A549 (cell line): ENCODE measurements at regions of chr17 and their contacts with region 1.

Region 1: DNA sequence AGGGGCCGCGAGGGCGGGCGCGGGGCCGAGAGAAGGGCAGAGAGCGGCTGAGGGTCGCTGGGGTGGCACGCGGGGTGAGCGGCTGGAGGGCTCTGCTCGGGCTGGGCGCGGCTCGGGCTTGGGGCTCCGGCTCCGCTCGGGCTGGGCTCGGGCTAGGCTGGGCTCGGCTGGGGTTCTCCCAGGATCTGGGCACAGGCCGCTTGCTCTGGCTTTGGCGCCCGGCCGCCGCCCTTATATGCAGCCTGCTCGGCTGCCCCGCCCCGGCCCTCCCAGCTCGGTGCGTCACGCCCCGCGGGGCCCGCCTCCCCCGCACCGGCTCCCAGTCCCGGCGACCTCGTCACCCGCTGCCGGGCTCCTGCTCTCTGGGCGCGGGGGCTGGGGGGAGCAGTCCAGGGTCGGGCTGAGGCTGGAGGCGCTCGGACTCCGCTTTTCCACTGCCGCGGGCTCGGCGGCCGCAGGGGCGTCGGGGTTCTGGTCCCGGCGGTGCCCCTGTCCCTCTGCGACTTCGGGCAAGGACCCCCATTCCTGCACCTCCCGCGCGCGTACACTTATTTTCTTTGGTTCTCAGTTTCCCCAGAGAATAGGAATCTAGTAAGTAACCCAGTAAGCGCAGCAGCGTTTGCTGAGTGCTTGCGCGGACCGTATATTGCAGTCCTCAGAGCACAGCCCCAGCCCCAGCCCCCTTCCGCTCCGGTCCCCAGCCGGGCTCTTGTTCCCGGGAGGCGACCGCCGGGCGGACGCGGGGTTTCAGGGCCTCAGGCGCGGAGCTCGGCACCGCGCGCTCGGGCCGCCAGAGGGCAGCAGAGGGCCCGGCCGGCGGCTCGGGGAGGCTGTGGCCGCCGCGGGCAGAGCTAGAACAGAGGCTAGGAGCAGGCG is at the start of gene RASD1:
- DNase-seq: peak; percentile 85 to 88
- ATAC-seq: peak; percentile 83 to 90
- H3K4me3 ChIP-seq: peak within 1 kb of the TSS; percentile 63
- H3K27ac ChIP-seq: peak within 1 kb of the TSS; percentile 81 to 93
- H3K4me1 ChIP-seq: peaks cover 4% of the 10 kb centered on the region; the same call in 2 of the 3 replicates
- CTCF ChIP-seq: peak; percentile 98
- EP300 ChIP-seq: no peak
- POLR2A ChIP-seq: peak; percentile 76
- RAD21 ChIP-seq: peak; percentile 69 to 94
- polyA plus RNA-seq, gene RASD1: 0.99 and 1.4 TPM in 2 replicates

Region 2: DNA sequence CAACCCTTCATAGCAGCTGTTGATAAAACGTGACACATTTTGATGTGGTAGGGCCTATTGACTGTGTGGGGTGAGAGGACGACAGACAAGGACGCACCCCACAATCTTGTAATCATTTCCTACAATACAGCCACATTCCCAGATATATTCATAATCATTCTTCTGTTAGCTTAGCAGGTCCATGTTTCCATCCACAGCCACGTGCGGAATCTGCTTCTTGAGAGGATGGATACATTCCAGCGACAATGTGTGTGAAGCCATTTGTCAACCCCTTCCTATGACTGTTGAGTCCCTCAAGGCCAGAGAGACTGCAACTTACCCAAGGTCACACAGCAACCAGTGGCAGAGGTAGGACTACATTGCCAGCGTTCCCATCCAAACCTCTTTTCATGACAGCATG is 206.7 kb before region 1 on chr17:
- CTCF ChIA-PET with region 1: no interaction called
- POLR2A ChIA-PET with region 1: no interaction called
- DNase-seq: no peak
- ATAC-seq: peak in 1 of 2 experiments; percentile 38; a peak in 2 of 6 replicates
- H3K4me3 ChIP-seq: no peak overlapping the region
- H3K27ac ChIP-seq: no peak overlapping the region
- H3K4me1 ChIP-seq: no peaks in the 10 kb centered on the region
- CTCF ChIP-seq: no peak
- EP300 ChIP-seq: no peak
- POLR2A ChIP-seq: no peak
- RAD21 ChIP-seq: no peak

Region 3: GRCh38 chr17:17322516-17323510 is 173.6 kb before region 1 on chr17:
- CTCF ChIA-PET with region 1: no interaction called
- POLR2A ChIA-PET with region 1: no interaction called
- DNase-seq: no peak
- ATAC-seq: peak; percentile 37 to 39; a peak in 4 of 6 replicates
- H3K4me3 ChIP-seq: no peak overlapping the region
- H3K27ac ChIP-seq: no peak overlapping the region
- H3K4me1 ChIP-seq: no peaks in the 10 kb centered on the region
- CTCF ChIP-seq: no peak
- EP300 ChIP-seq: no peak
- POLR2A ChIP-seq: no peak
- RAD21 ChIP-seq: no peak

Region 4: DNA sequence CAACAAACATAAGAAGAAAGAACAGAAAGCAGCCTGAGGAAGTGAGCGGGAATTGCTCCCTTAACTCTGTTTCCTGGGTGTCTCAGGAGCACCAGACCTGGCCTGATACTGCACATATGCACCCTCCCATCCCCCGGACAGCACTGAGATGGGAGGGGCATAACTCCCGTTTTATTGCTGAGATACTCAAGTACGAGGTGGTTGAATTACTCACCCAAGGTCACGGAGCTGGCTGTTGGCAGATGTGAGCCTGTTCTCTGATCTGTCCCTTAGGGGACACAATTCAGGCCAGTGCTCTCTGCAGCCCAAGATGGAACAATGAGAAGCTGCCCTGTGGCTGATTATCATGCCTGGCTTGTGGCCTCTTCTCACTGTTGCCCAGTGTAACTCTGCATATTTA is 28.7 kb before region 1 on chr17:
- CTCF ChIA-PET with region 1: interaction called, 22 read pairs
- POLR2A ChIA-PET with region 1: interaction called, 13 read pairs
- DNase-seq: peak in 1 of 2 experiments; percentile 29
- ATAC-seq: peak; percentile 31 to 34; a peak in 3 of 6 replicates
- H3K4me3 ChIP-seq: no peak overlapping the region
- H3K27ac ChIP-seq: no peak overlapping the region
- H3K4me1 ChIP-seq: 0 out of 3 replicates have a peak, but pooled peaks cover 5% of the 10 kb centered on the region
- CTCF ChIP-seq: no peak
- EP300 ChIP-seq: no peak
- POLR2A ChIP-seq: no peak
- RAD21 ChIP-seq: no peak

Region 5: GRCh38 chr17:17511881-17512858 is 15.7 kb after region 1 on chr17:
- CTCF ChIA-PET with region 1: interaction called, 102 read pairs
- POLR2A ChIA-PET with region 1: interaction called, 10 read pairs
- DNase-seq: peak; percentile 39 to 54
- ATAC-seq: peak; percentile 31 to 62; a peak in 3 of 6 replicates
- H3K4me3 ChIP-seq: no peak overlapping the region
- H3K27ac ChIP-seq: peak overlapping the region in 1 of 2 experiments; percentile 45; a peak in 3 of 6 replicates
- H3K4me1 ChIP-seq: peaks cover 15% of the 10 kb centered on the region
- CTCF ChIP-seq: no peak
- EP300 ChIP-seq: no peak
- POLR2A ChIP-seq: no peak
- RAD21 ChIP-seq: no peak

Region 6: DNA sequence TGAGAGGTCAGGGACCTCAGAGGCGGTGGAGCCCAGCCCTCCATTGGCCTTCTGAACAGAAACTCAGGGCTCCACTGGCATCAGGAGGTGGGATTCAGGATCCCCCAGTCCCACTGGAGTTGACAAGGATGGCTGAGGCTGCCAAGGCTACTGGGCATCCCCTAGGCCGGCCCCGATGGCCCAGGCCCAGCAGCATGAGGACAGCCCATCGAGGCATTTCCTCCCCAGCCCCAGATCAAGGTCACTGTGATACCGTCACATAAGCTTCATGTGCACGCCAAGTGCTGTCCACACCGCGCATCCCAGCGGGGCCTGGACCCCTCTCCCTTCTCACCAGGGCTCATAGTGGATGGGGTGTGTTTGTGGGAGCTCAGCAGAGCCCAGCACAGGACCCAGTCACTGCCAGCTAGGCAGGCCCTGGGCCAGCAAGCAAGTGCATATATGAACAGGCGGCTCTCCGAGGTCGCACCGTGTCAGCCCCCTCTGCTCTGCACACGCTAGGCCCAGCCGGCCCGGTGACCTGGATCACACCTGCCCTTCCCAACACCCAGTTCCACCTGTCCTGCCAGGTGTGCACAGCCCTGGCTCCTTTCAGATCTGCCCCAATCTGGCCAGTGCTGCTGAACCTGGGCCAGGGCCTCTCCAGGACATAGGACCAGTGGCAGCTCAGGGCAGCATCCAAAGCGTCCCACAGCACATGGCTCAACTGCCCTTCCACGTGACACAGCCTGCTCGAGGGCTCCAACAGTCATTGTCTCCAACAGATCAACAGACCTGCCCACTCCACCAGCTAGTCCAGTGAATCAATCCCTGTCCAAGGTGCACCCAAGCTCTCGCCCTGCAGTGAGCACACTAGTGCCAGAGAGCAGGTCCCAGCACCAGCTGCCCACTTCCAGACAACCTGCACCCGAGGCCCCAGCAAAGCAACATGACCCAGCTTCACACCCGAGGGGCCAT is 32.5 kb after region 1 on chr17:
- CTCF ChIA-PET with region 1: interaction called, 27 read pairs
- POLR2A ChIA-PET with region 1: interaction called, 8 read pairs
- DNase-seq: no peak
- ATAC-seq: peak in 1 of 2 experiments; percentile 42; a peak in 2 of 6 replicates
- H3K4me3 ChIP-seq: no peak overlapping the region
- H3K27ac ChIP-seq: no peak overlapping the region
- H3K4me1 ChIP-seq: 0 out of 3 replicates have a peak, but pooled peaks cover 4% of the 10 kb centered on the region
- CTCF ChIP-seq: no peak
- EP300 ChIP-seq: no peak
- POLR2A ChIP-seq: no peak
- RAD21 ChIP-seq: no peak

Region 7: GRCh38 chr17:17561408-17562145 is 65.2 kb after region 1 on chr17:
- CTCF ChIA-PET with region 1: interaction called, 254 read pairs
- POLR2A ChIA-PET with region 1: interaction called, 6 read pairs
- DNase-seq: no peak
- ATAC-seq: no peak
- H3K4me3 ChIP-seq: no peak overlapping the region
- H3K27ac ChIP-seq: no peak overlapping the region
- H3K4me1 ChIP-seq: no peaks in the 10 kb centered on the region
- CTCF ChIP-seq: no peak
- EP300 ChIP-seq: no peak
- POLR2A ChIP-seq: no peak
- RAD21 ChIP-seq: no peak

Region 8: GRCh38 chr17:17591355-17592298 is 95.2 kb after region 1 on chr17 and contains the start of gene PEMT:
- CTCF ChIA-PET with region 1: interaction called, 30 read pairs
- POLR2A ChIA-PET with region 1: interaction called, 22 read pairs
- DNase-seq: peak; percentile 96 to 100
- ATAC-seq: peak; percentile 94 to 98
- H3K4me3 ChIP-seq: peak within 1 kb of the TSS; percentile 86
- H3K27ac ChIP-seq: peak within 1 kb of the TSS; percentile 89 to 94
- H3K4me1 ChIP-seq: peaks cover 16% of the 10 kb centered on the region
- CTCF ChIP-seq: no peak
- EP300 ChIP-seq: no peak
- POLR2A ChIP-seq: peak; percentile 78
- RAD21 ChIP-seq: no peak
- polyA plus RNA-seq, gene PEMT: 47.8 and 62.4 TPM in 2 replicates

Region 9: GRCh38 chr17:18235743-18236256 is 739.4 kb after region 1 on chr17:
- CTCF ChIA-PET with region 1: no interaction called
- POLR2A ChIA-PET with region 1: no interaction called
- DNase-seq: no peak
- ATAC-seq: peak in 1 of 2 experiments; percentile 15; a peak in 3 of 6 replicates
- H3K4me3 ChIP-seq: no peak overlapping the region
- H3K27ac ChIP-seq: peak overlapping the region in 1 of 2 experiments; percentile 52; a peak in 2 of 6 replicates
- H3K4me1 ChIP-seq: peaks cover 6% of the 10 kb centered on the region; the same call in 1 of the 3 replicates
- CTCF ChIP-seq: no peak
- EP300 ChIP-seq: no peak
- POLR2A ChIP-seq: no peak
- RAD21 ChIP-seq: no peak